KBM-7 (cell line): ENCODE measurements at regions of chr1 and their contacts with region 1.

Region 1: DNA sequence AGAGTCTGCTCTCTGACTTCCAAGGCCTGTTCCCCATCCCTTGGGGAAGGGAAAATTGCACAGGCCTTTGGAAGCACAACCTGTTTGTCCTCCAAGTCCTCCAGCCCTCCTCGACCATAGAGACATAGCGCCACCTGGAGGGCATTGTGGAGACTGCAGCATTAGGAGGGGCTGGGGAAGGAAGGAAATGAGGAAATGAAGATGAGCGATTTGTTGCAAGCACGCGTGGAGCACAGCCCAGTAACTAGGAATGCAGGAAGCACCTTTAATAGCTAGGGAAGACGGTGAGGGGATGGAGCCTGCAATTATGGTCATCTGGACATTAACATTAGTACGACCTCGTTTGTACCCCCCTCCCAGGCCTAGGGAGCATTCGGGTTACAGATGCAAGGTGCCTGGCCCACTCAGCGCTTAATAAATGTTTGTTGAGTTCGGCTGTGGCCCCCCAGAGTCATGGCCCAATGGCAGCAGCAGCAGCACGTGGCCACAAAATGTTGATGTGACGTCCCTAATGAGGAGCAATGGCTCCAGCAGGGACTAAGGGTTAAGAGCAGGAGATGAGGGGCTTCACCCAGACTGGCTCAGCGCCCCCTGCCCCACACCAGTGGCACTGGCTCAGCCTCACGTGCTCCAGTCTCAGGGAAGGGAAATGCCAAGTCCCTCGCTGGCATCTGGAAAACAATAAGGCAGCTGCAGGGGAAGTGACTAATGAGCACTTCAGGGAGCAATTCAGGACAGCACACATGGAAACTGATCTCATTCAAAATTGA is 8.0 kb upstream of the CAMK2N1 start:
- DNase-seq: peak; percentile 95

Region 2: GRCh38 chr1:20212685-20213331 is 281.2 kb before region 1 on chr1:
- in situ Hi-C with region 1: loop called (anchors 25 kb)
- DNase-seq: peak; percentile 70

Region 3: DNA sequence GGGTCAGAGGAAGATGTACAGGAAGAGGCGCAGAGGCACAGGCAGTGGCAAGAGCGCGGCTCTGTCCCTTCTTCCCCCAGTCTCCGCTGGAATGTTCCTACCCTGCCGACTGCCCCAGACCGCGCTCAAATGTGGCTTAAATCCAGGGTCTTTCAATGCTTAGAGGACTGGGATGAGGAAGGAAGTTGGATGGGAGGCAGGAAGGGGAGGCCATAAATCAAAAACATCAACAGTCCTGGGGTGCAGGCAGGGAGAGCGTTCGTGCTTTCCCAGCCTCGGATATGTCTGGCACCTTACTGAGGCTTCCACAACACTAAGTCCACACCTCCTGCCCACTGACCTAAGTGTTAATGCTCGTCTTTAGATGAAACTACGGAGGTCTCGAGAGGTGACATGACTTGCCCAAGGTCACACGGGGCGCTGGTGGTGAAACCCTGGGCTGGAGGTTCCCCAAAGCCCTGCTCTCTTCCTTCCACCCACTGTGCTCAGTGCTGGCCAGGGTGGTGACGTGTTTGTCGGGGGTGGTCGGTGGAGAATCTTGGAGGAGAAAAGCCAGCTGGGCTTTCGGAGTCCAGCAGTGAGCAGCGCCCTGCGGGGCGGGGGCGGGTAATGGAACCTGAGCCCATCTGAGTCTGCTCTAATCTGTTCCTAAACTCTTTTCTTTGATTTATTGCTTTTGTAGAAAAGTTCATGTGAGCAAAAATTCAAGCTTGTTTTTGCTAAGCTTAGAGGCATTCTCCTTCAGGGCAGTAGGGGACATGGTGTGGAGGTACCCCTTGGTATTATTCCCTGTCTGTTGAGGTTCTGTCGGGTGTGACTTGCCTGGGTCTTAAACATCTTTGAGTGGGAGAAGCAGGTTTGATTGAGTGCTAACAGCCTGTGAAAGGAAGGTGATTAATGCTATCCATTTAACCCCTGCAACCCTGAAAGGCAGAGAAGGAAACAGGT is 95.6 kb after region 1 on chr1:
- in situ Hi-C with region 1: no loop called
- DNase-seq: peak; percentile 24

Region 4: GRCh38 chr1:21189906-21190500 is 696.0 kb after region 1 on chr1:
- in situ Hi-C with region 1: no loop called
- DNase-seq: no peak